GM12878 (cell line): ENCODE measurements at regions of chr2 and their contacts with region 1.

Region 1: GRCh38 chr2:121960251-121960650 is 204.8 kb downstream of the TSN start:
- DNase-seq: no peak
- ATAC-seq: peak; percentile 78
- H3K4me3 ChIP-seq: no peak overlapping the region
- H3K27ac ChIP-seq: no peak overlapping the region
- H3K4me1 ChIP-seq: no peaks in the 10 kb centered on the region
- H3K27me3 ChIP-seq: peaks cover 0 to 1% of the 10 kb centered on the region in 2 experiments; a peak in 2 of 4 replicates
- CTCF ChIP-seq: no peak
- EP300 ChIP-seq: no peak
- POLR2A ChIP-seq: no peak
- RAD21 ChIP-seq: no peak

Region 2: DNA sequence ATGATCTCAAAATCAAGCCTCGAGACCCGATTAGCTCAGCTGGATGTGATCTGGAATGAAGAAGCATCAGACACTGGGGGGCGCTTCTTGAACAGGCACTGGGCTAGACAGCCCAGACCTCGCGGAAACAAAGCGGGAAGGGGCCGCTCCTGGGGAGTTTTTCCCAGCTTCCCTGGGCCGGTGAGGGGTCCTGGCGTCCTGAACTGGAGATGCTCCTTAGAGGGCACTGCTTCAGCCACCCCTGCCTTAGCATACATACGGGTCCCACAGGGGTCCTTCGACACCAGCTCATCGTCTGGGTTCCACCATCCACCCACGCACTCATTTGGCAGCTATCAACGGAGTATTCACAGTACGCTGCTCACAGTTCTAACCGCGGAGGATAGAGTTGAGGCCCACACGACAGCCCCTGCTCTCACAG is 58.1 kb before region 1 on chr2:
- CTCF ChIA-PET with region 1: interaction called, 10 read pairs
- POLR2A ChIA-PET with region 1: no interaction called
- RAD21 ChIA-PET with region 1: interaction called, 4 read pairs
- SMC1A ChIA-PET with region 1: no interaction called
- in situ Hi-C with region 1: no loop called
- intact Hi-C with region 1: no loop called
- DNase-seq: no peak
- ATAC-seq: no peak
- H3K4me3 ChIP-seq: no peak overlapping the region
- H3K27ac ChIP-seq: no peak overlapping the region
- H3K4me1 ChIP-seq: no peaks in the 10 kb centered on the region
- H3K27me3 ChIP-seq: peaks cover 0 to 3% of the 10 kb centered on the region in 2 experiments; a peak in 2 of 4 replicates
- CTCF ChIP-seq: peak in 2 of 3 experiments; percentile 8 to 29; a peak in 1 of 6 replicates
- EP300 ChIP-seq: no peak
- POLR2A ChIP-seq: peak; percentile 34; the same call in 1 of the 2 replicates
- RAD21 ChIP-seq: no peak